Activated CD4-positive, alpha-beta T cell treated with anti-CD3 and anti-CD28 coated beads, Interleukin-2, amount 10 ng/mL, durations not matched to agents 24 days and 14 days (primary cell): ENCODE measurements at regions of chr1 and their contacts with region 1.

Region 1: DNA sequence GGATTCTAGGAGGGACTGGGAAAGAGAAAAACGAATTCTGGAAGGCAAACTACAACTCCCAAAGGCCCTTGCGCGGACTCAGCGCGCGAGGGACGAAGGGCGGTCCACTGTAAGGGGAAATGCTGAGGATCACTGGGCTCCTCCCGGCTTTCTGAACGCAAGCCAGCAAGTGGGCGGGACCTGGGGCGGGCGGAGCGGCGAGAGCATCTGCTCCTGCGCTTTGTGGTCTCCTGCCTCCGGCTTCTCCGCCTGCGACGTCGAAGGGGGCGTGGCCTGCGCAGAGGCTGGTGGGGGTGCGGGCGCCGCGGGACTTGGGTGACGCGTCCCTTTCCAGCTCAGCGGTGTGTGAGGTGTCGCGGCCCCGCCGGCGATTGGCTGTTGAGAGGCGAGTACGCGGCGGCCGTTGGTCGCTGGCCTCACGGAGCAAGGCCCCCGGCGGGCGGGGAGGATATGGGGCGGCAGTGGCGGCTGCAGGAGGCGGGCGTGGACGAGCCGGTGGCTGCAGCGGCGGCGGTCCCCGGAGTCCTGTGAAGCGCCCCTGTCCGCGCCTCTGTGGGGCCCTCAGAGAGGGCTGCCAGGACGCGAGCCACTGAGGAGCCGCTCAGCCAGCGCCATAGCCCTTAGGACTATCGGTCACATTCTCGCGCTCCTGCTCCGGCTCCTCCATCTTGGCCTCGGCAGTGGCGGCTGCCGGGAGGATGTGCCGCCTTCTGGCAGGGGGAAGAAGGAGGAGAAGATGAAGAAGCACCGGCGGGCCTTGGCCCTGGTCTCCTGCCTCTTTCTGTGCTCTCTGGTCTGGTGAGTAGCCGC is at the start of gene SUCO:
- DNase-seq: peak; percentile 100
- H3K4me3 Mint-ChIP-seq: peak within 1 kb of the TSS; percentile 89
- H3K27ac Mint-ChIP-seq: peak within 1 kb of the TSS; percentile 97
- H3K4me1 Mint-ChIP-seq: peaks cover 38% of the 10 kb centered on the region
- H3K27me3 Mint-ChIP-seq: peaks cover 17% of the 10 kb centered on the region
- total RNA-seq, gene SUCO: 37.2 and 38.0 TPM in 2 replicates

Region 2: GRCh38 chr1:171781176-171781875 is 751.6 kb before region 1 on chr1 and contains the start of gene METTL13:
- intact Hi-C with region 1: loop called (anchors 1 kb)
- DNase-seq: peak; percentile 100
- H3K4me3 Mint-ChIP-seq: peak within 1 kb of the TSS; percentile 98
- H3K27ac Mint-ChIP-seq: peak within 1 kb of the TSS; percentile 94
- H3K4me1 Mint-ChIP-seq: peaks cover 45% of the 10 kb centered on the region
- H3K27me3 Mint-ChIP-seq: no peaks in the 10 kb centered on the region
- total RNA-seq, gene METTL13: 56.1 and 57.8 TPM in 2 replicates

Region 3: DNA sequence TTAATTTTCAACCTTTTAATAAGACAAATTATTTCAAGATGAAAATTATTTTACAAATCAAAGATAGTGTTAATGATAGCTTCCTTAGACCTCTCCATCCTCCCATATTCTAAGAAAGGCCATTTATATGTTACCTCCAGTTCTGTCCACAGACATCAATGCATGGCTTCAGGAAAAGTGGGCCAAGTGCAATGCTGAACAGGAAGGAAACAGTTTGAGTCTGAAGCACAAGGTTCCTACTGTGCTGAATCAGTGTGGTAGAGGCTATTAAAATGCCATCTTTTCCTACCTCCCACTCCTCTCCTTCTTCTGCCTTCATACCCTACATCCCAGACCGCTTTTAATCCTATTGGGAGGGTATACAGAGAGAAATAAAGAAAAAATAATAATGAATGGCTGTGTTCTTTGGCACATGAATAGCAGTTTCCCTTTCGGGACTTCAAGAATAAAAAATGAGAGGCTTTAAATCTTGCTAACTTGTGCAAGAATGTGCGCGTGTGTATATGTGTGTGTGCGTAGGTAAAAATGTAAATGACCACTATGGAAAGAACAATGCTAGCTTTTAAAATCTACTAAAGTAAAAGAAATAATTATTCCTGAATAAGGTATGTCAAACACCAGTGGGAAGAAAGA is 175.0 kb before region 1 on chr1:
- intact Hi-C with region 1: loop called (anchors 2 kb)
- DNase-seq: no peak
- H3K4me3 Mint-ChIP-seq: peak overlapping the region; percentile 7
- H3K27ac Mint-ChIP-seq: peak overlapping the region; percentile 84
- H3K4me1 Mint-ChIP-seq: peaks cover 45% of the 10 kb centered on the region
- H3K27me3 Mint-ChIP-seq: no peaks in the 10 kb centered on the region

Region 4: GRCh38 chr1:172380441-172381244 is 152.3 kb before region 1 on chr1:
- intact Hi-C with region 1: no loop called
- DNase-seq: peak; percentile 80
- H3K4me3 Mint-ChIP-seq: peak overlapping the region; percentile 57
- H3K27ac Mint-ChIP-seq: peak overlapping the region; percentile 86
- H3K4me1 Mint-ChIP-seq: peaks cover 18% of the 10 kb centered on the region
- H3K27me3 Mint-ChIP-seq: no peaks in the 10 kb centered on the region

Region 5: DNA sequence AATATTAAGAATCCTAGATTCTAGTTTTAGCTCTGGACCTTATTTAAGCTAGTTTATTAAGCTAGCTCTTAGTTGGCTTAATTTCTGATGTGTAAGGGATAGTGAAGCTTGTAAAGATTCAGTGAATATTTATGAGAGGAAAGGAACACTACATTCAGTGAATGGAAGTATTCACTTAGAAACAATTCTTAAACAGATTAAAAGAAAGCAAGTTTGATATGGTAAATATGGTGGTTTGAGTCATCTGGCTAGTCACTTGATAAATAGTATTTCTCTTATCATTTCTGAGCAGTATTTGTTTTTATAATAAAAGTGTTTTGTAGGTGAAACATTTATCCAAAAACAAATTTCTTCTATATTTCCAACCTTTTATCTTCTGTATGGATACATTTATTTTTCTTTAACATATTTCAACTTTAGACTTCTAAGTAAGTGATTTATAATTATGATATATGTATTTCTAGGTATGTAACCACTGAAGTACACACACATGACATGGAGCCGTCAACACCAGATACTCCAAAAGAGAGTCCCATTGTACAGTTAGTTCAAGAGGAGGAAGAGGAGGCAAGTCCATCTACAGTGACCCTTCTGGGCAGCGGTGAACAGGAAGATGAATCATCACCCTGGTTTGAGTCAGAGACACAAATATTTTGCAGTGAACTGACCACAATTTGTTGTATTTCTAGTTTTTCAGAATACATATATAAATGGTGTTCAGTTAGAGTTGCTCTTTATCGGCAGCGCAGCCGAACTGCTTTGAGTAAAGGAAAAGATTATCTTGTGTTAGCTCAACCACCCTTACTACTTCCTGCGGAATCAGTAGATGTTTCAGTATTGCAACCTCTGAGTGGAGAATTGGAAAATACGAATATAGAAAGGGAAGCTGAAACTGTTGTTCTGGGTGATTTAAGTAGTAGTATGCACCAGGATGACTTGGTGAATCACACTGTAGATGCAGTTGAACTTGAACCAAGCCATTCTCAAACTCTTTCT is 55.7 kb after region 1 on chr1:
- intact Hi-C with region 1: loop called (anchors 2 kb)
- DNase-seq: no peak
- H3K4me3 Mint-ChIP-seq: no peak overlapping the region
- H3K27ac Mint-ChIP-seq: peak overlapping the region; percentile 85
- H3K4me1 Mint-ChIP-seq: peaks cover 12% of the 10 kb centered on the region
- H3K27me3 Mint-ChIP-seq: no peaks in the 10 kb centered on the region

Region 6: GRCh38 chr1:172719694-172720138 is 186.8 kb after region 1 on chr1:
- intact Hi-C with region 1: loop called (anchors 2 kb)
- DNase-seq: peak; percentile 79
- H3K4me3 Mint-ChIP-seq: no peak overlapping the region
- H3K27ac Mint-ChIP-seq: peak overlapping the region; percentile 35
- H3K4me1 Mint-ChIP-seq: peaks cover 42% of the 10 kb centered on the region
- H3K27me3 Mint-ChIP-seq: no peaks in the 10 kb centered on the region

Region 7: GRCh38 chr1:173824331-173825081 is 1291.6 kb after region 1 on chr1 and contains the starts of genes CENPL and DARS2:
- intact Hi-C with region 1: loop called (anchors 1 kb)
- DNase-seq: peak; percentile 97
- H3K4me3 Mint-ChIP-seq: peak within 1 kb of the TSS; percentile 99
- H3K27ac Mint-ChIP-seq: peak within 1 kb of the TSS; percentile 98
- H3K4me1 Mint-ChIP-seq: peaks cover 49% of the 10 kb centered on the region
- H3K27me3 Mint-ChIP-seq: no peaks in the 10 kb centered on the region
- total RNA-seq, gene CENPL: 23.2 and 24.4 TPM in 2 replicates
- total RNA-seq, gene DARS2: 47.6 and 52.2 TPM in 2 replicates